Aorta (tissue), 5 donors: ENCODE measurements at regions of chr16 and their contacts with region 1.

Region 1: GRCh38 chr16:87950765-87951549 is at the start of gene BANP:
- DNase-seq: peak; percentile 98 to 99
- ATAC-seq: peak; percentile 97
- H3K4me3 ChIP-seq: peak within 1 kb of the TSS; percentile 93 to 99
- H3K27ac ChIP-seq: peak within 1 kb of the TSS; percentile 91 to 95
- H3K4me1 ChIP-seq: no peaks in the 10 kb centered on the region
- H3K27me3 ChIP-seq: no peaks in the 10 kb centered on the region
- total RNA-seq, gene BANP: 25.5 to 35.6 TPM

Region 2: GRCh38 chr16:88063211-88063773 is 112.3 kb after region 1 on chr16:
- intact Hi-C with region 1: loop called in 1 of 2 experiments (anchors 5 kb)
- DNase-seq: peak; percentile 66 to 82
- ATAC-seq: peak; percentile 58
- H3K4me3 ChIP-seq: no peak overlapping the region
- H3K27ac ChIP-seq: peak overlapping the region in 1 of 2 donors; percentile 28
- H3K4me1 ChIP-seq: no peaks in the 10 kb centered on the region
- H3K27me3 ChIP-seq: no peaks in the 10 kb centered on the region

Region 3: DNA sequence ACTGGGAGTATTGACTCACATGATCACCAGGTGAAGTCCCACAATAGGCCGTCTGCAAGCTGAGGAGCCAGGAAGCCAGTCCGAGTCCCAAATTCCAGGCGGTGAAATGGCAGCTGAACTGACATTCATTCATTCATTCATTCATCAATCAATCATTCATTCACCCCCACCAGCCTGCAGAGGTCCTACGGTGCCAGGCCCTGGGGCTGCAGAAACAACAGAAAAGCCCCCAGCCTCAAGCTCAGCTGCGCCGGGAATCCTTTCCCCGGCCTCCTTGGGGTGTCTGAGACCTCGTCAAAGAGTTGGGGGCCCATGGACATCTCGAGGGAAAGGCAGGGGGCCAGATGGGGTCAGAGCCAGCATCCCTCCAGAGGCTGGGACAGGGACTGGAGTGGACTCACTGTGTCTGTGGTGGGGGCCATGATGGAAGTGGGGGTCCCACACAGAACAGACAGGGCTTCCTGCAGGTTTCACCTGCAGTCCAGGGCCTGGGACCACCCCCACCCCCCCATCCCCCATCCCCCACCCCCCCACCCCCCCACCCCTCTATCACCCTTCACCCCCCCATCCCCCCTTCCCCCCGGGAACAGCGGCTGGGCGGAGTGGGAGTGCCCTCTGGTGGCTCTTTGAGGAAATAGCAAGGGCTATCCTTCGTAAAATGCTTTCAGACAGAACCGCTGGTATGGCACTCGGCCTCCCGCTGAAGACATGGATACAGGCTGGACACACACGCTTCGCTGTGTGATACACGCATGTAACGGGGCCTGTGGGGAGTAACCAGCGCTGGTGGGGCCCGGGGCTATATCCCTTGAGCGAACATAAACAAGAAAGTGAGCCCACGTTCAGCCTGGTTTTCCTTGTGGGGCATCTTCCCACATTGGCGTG is 610.8 kb after region 1 on chr16:
- intact Hi-C with region 1: no loop called
- DNase-seq: peak in 1 of 2 donors; percentile 83
- ATAC-seq: peak; percentile 79
- H3K4me3 ChIP-seq: no peak overlapping the region
- H3K27ac ChIP-seq: no peak overlapping the region
- H3K4me1 ChIP-seq: no peaks in the 10 kb centered on the region
- H3K27me3 ChIP-seq: no peaks in the 10 kb centered on the region